Head of caudate nucleus (tissue), 42 donors: ENCODE measurements at regions of chr10 and their contacts with region 1.

Region 1: GRCh38 chr10:63629363-63630084 is 108.3 kb downstream of the REEP3 start:
- DNase-seq: peak; percentile 90 to 98 (median 95)

Region 2: GRCh38 chr10:63217120-63217605 is 412.4 kb before region 1 on chr10:
- intact Hi-C with region 1: loop called (anchors 5 kb)
- DNase-seq: peak in 11 of 42 donors; percentile 21 to 65 (median 40)

Region 3: DNA sequence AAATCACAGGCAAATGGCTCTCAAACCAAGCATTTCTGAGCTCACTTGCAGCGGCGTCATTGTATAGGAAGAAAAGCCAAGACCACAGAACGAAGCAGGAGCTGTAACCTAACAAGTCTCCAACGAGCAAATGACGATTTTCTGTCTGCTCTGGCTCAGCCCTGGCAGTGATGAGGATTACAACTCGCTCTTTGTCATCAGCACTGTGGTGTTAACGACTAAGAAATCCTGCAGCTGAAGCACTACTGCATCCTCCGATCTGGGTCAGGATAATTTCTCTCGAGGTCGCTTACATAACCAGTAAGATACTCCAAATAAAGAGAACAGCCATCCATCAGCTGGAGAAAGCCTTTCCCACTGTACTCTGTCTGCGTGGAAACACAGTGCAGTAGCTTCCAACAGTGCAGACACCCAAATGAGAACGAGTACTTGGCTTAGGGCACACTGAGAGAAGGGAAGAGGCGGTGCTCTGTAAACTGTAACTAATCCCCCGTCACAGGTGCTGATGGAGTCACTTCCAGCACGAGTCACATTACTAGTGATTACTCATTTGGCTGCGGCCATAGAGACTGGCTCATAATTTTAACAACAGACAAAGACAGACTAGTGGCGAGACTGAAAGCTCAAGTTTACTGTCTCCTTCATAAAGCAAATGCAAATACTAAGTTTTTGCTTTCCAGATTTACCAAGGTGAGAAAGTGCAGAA is 360.6 kb before region 1 on chr10:
- intact Hi-C with region 1: loop called (anchors 5 kb)
- DNase-seq: peak; percentile 12 to 91 (median 71)

Region 4: GRCh38 chr10:63346015-63346441 is 283.5 kb before region 1 on chr10:
- intact Hi-C with region 1: no loop called
- DNase-seq: no peak

Region 5: DNA sequence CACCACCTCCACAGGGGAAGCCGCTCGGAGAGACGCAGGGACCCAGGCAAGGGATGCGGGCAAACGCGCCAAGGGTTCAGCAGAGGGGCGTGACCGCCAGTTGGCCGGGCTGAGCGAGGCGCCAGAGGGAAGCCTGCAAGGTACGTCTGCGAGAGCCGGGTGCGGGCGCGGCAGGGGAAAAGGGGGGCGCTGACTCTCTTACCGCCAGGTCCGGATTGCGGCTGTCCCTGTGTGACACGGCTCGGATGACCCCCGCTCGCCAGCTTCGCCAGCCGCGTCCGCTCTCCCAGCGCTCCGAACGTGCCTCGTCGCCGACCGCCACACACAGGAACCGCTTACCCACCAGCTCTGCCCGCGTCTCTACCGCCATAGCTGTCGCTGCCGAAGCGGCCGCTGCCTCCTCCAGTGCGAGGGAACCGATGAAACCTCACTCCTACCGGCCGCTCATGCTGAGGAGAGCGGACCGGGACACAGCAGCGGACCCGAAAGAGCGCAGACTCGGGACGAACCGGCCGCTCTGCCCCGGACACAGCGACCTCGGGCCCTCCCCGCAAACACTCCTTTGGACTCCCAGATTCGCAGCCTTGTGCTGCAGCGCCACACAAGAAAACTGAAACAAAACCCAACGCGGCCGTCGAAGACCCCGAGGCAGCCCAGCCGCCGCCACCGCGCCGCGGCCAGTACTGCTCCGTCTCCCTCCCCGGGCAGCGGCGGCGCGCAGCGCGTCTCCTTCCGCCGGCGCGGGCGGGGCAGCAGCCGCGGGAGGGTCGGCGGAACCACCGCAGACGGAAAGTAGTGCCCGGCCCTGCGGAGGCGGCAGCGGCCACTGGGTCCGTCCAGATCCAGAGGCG is 164.0 kb before region 1 on chr10 and contains the start of gene JMJD1C:
- intact Hi-C with region 1: loop called (anchors 5 kb)
- DNase-seq: peak; percentile 26 to 87 (median 72)

Region 6: DNA sequence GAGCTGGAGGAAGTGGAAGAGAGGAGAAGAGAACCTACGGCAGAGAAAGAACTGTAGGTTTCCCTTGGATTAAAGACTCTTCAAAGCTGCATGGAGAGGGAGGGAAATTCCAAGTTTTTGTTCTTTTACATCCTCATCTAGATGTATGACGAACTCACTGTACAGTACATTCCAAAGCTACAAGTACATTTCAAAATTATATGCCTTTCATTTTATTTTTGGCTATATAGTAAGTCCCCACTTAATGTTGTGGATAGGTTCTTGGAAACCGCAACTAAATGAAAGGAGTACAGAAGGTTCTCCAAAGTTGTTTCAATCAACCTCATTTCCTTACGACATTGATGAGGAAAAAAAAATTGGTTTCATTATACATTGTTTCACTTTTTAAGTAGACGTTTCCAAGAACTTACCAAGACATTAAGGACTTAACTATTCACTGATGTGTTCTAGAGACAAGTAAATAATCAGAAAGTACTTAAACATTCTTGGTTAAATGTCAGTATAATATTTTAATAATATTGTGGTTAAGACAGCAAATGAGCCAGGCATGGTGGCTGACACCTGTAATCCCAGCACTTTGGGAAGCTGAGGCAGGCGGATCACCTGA is 147.6 kb before region 1 on chr10:
- intact Hi-C with region 1: no loop called
- DNase-seq: no peak

Region 7: GRCh38 chr10:63521416-63522276 is 107.9 kb before region 1 on chr10:
- intact Hi-C with region 1: loop called (anchors 2 kb)
- DNase-seq: peak; percentile 58 to 93 (median 82)

Region 8: DNA sequence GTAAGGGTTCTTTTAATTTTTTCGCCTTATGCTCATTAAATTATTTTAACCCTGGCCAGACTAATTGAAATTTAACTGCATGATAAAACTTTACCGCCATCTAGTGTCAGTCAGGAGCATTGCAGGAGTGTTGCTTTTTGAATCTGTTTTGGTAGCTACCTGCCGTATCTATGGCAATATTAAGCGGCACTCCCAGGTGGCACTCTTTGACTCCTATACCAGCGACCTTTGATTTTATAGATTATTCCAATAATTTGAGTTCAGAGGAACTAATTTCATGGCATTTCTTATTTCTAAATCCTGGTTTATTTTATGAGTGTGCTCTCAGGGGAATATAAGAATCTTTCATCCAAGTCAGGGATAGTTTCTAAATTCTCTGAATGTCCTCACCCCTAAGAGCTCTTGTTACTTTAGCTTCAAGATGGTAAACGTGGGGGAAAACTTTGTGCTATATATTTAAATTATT is 90.6 kb after region 1 on chr10:
- intact Hi-C with region 1: loop called (anchors 5 kb)
- DNase-seq: peak in 33 of 42 donors; percentile 19 to 86 (median 59)

Region 9: DNA sequence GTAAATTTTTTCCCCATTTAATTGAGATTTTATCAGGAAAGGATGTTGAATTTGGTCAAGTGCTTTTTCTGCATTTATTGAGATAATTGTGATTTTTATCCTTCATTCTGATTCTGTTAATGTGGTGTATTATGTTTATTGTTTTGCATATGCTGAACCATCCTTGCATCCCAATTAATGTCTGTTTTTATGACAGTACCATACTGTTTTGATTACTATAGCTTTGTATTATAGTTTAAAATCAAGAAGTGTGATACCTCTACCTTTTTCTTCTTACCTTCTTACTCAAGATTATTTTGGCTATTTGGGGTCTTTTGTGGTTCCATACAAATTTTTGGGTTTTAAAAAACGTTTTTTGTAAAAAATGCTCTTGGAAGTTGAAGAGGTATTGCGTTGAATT is 248.9 kb after region 1 on chr10:
- intact Hi-C with region 1: no loop called
- DNase-seq: no peak